Breast epithelium (tissue), 4 donors: ENCODE measurements at regions of chr5 and their contacts with region 1.

Region 1: DNA sequence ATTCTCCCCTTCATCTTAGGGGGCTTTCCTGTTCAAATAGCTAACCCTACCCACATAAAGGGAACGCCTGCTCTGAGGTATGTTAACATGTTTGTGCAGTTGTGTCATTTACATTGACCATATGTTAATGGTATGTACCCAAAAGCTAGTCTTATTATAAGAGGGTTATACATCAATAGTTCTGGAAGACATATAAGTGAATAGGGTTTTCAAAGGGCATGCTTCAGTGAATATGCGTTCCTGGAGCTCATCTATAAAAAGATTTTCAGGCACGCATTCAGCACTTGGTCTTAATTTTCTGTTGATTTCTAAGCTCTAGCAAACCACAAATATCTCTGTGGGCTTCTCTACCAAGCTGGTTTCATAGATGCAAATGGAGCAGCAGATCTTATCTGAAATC is 766.1 kb downstream of the IRX1 start:
- DNase-seq: no peak
- H3K4me3 ChIP-seq: no peak overlapping the region
- H3K27ac ChIP-seq: peak overlapping the region in 1 of 2 donors; percentile 10
- H3K4me1 ChIP-seq: no peaks in the 10 kb centered on the region
- H3K27me3 ChIP-seq: no peaks in the 10 kb centered on the region
- CTCF ChIP-seq: no peak
- POLR2A ChIP-seq: no peak

Region 2: DNA sequence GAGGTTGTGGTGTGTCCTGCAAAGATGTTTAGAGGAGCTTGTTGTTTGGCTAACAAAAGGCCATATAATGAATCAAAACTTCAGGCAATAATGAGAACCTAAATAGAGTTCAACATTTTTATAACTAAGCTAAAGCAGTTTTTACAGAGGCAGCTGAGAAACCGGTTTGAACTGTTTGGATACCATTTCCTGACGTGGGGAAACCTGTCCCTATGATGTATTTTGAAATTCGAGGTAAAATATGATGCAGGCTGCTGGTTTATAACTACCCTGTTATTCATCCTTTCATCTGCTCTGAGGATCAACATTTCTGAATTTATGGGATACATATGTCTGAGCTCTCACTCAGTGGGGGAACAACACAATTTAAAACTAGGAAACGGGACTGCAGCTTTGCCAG is 1320.8 kb before region 1 on chr5:
- intact Hi-C with region 1: loop called (anchors 5 kb)
- DNase-seq: no peak
- H3K4me3 ChIP-seq: no peak overlapping the region
- H3K27ac ChIP-seq: no peak overlapping the region
- H3K4me1 ChIP-seq: no peaks in the 10 kb centered on the region
- H3K27me3 ChIP-seq: no peaks in the 10 kb centered on the region
- CTCF ChIP-seq: no peak
- POLR2A ChIP-seq: no peak

Region 3: DNA sequence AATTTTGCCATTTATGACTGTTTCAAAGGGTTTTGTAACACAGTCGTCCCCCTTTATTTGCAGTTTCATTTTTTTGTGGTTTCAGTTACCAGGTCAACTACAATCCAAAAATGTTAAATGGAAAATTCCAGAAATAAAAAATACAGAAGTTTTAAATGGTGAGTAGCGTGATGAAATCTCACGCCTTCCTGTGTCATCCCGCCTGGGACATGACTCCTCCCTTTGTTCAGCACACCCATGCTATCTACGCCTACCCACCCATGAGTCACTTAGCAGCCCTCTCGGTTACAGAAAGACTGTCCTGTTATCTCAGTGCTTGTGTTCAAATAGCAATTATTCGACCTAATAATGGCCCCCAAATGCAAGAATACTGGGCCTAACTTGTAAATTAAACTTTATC is 13.1 kb after region 1 on chr5:
- intact Hi-C with region 1: no loop called
- DNase-seq: no peak
- H3K4me3 ChIP-seq: no peak overlapping the region
- H3K27ac ChIP-seq: peak overlapping the region; percentile 57 to 67
- H3K4me1 ChIP-seq: no peaks in the 10 kb centered on the region
- H3K27me3 ChIP-seq: no peaks in the 10 kb centered on the region
- CTCF ChIP-seq: no peak
- POLR2A ChIP-seq: no peak